OCI-LY7 (cell line): ENCODE measurements at regions of chr9 and their contacts with region 1.

Region 1: DNA sequence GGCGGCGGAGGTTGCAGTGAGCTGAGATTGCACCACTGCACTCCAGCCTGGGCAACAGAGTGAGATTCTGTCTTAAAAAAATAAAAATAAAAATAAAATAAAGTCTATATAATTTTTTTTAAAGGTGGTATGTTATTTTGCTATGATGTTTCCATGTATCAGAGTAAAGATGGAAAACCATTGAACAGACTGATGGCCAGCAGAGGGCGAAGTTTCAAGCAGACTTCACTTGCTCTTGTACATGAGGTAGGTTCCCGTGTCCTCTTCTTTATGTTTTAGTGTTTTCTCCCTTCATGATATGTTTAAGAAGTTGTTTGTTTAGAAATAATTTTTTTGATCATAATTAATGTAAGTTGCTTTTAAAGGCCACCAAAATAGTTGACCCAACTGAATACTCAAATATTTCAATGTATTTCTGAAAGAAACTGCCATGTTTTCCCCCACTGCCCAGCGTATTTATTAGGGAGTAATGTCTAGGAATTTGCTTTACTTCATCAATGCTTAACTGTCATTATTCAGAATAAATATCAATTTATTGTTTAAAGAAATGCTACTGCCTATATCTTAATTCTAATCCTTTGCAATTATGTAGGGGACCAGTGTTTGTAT is 146.4 kb downstream of the HACD4 start:
- DNase-seq: peak; percentile 50
- H3K4me3 ChIP-seq: no peak overlapping the region
- H3K27ac ChIP-seq: no peak overlapping the region
- H3K4me1 ChIP-seq: no peaks in the 10 kb centered on the region
- CTCF ChIP-seq: peak; percentile 77

Region 2: DNA sequence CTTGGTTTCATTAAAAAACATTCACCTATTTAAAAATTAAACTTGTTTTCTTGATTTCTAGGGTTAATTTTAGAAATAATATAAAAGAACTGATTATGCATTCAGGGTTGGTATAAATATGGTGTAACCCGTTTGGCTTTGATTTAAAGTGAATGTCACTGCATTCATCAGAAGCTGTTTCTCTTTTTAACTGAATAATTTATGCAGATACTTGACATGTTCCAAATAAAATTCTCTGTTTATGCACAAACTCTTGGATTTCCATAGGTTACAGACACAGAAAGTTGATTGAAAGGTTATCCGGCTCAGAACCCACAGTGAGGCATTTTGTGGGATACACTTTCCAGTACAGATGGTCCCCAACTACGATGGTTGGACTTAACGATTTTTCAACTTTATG is 15.0 kb before region 1 on chr9:
- CTCF ChIA-PET with region 1: no interaction called
- POLR2A ChIA-PET with region 1: interaction called, 18 read pairs
- intact Hi-C with region 1: no loop called
- DNase-seq: no peak
- H3K4me3 ChIP-seq: no peak overlapping the region
- H3K27ac ChIP-seq: no peak overlapping the region
- H3K4me1 ChIP-seq: no peaks in the 10 kb centered on the region
- CTCF ChIP-seq: no peak

Region 3: DNA sequence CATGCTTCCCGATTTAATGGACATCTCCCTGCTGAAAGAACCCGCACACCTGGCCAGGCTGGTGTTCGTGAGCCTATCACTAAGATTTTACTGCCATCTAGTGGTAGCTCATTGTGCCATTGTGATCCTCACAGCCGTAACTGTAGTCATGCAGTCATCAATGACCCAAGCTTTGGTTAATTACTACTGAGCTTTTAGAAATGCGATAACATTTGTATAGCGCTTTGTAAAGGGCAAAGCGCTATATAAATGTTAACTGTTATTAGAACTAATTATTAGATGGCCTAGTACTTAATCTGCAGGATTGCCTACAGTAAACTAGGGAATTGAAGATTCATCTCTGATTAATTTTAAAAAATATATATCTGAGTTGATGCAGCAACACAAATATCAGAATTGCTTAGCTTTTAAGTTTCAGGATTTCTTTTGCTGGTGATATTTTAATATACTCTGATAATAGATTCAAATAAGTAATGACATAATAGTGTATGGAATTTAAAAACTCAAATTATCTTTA is 56.1 kb after region 1 on chr9:
- CTCF ChIA-PET with region 1: no interaction called
- POLR2A ChIA-PET with region 1: no interaction called
- intact Hi-C with region 1: no loop called
- DNase-seq: peak; percentile 84
- H3K4me3 ChIP-seq: no peak overlapping the region
- H3K27ac ChIP-seq: no peak overlapping the region
- H3K4me1 ChIP-seq: no peaks in the 10 kb centered on the region
- CTCF ChIP-seq: peak; percentile 95